ENCODE measurements at regions of chr18 and their contacts with region 1.

Region 1: GRCh38 chr18:62186774-62187542 is at the starts of genes PIGN and RELCH:
- DNase-seq: peak; percentile 96
- H3K4me3 Mint-ChIP-seq: peak within 1 kb of the TSS; percentile 96
- H3K27ac Mint-ChIP-seq: peak within 1 kb of the TSS; percentile 90
- H3K4me1 Mint-ChIP-seq: peaks cover 54% of the 10 kb centered on the region
- H3K27me3 Mint-ChIP-seq: no peaks in the 10 kb centered on the region
- total RNA-seq, gene PIGN: 27.2 to 29.7 TPM
- total RNA-seq, gene RELCH: 34.8 to 38.6 TPM

Region 2: DNA sequence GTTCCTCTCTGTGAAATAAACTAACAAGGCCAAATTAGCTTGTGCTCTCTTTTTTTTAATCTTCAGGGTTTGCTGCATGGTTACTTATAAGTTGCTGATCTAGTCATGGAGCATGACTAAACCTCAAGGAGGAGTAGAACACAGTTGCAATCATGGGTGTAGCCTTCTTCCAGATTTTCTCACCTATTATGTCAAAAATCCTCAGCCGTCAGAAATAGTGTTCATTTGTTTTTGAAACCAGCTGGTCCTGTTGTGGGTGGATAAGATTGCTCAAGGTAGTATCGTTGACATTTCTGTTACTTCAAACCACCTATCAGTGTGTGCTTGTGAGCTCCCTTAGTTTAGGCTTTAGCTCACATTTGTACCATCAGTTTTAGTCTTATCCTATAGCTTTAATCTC is 11.3 kb after region 1 on chr18:
- CTCF ChIA-PET with region 1: interaction called, 3 read pairs
- POLR2A ChIA-PET with region 1: interaction called, 14 read pairs
- DNase-seq: no peak
- H3K4me3 Mint-ChIP-seq: no peak overlapping the region
- H3K27ac Mint-ChIP-seq: no peak overlapping the region
- H3K4me1 Mint-ChIP-seq: peaks cover 30% of the 10 kb centered on the region
- H3K27me3 Mint-ChIP-seq: no peaks in the 10 kb centered on the region

Region 3: DNA sequence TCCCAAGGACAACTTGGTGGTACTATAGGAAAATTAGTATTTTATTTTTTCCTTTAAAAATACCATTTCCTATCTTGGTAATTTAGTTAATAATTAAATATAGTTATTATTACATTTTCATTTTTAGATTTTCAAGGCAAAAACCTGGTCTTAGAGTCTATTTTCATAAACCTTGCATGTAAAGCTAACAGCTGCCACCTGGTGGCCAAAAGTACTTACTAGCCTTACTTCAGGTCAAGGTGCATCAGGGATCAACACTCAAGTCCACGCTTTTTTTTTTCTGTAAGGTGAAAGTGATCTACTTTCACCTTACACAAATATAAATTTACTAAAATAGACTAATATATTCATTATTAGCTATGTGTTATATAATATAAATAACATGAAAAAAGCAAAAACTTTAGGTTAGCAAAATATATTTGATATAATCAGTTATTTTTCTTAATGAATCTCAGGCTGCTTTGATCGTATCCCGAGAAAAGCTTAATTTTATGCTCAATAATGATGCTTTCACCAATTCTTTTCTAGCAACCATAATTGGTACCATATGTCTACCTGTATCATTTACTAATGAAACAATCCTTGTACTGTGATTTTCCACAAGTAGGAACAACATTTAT is 62.6 kb after region 1 on chr18:
- CTCF ChIA-PET with region 1: interaction called, 41 read pairs
- POLR2A ChIA-PET with region 1: interaction called, 17 read pairs
- DNase-seq: peak; percentile 74
- H3K4me3 Mint-ChIP-seq: no peak overlapping the region
- H3K27ac Mint-ChIP-seq: no peak overlapping the region
- H3K4me1 Mint-ChIP-seq: no peaks in the 10 kb centered on the region
- H3K27me3 Mint-ChIP-seq: no peaks in the 10 kb centered on the region

Region 4: DNA sequence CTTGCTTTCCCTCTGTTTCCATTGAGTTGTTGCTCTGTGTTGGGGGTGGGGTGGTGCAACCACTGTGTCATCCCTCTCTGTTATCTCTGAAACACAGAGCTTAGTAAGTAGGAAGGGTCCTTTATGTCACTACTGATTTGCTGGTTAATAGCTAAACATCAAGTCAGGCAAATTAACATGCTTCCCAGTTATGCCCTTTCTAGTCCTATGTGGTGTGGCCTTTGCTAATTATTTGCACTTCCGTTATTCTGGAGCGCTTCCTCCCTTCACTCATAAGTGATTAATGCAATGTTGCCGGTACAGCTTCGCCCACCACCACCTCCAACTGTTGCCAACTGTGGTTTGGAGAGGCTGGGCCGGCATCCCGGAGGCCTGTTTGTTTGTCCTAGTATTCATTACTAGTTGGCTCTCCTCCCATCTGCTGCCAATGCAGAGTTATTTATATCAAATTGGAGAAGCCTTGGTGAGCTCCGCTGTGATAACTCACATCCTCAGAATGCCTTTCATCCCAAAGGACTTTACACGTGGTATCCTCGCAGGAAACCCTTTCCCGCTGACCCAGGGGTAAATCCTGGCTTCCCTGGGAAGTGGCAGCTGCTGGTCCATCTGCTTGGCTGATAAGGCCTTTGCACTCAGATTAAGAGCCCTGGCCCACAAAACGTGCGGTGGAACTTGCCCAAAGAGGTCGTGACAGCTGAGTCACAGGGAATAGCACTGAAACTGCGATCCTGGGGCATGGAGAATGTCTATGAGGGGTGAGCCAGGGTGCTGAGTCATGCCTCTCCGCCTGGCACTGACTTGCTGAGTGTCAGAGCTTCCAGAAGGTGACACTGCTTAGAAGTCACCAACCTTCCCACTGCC is 263.8 kb after region 1 on chr18:
- CTCF ChIA-PET with region 1: no interaction called
- POLR2A ChIA-PET with region 1: no interaction called
- DNase-seq: no peak
- H3K4me3 Mint-ChIP-seq: no peak overlapping the region
- H3K27ac Mint-ChIP-seq: no peak overlapping the region
- H3K4me1 Mint-ChIP-seq: peaks cover 19% of the 10 kb centered on the region
- H3K27me3 Mint-ChIP-seq: peaks cover 9% of the 10 kb centered on the region

Region 5: GRCh38 chr18:62505669-62506494 is 318.9 kb after region 1 on chr18:
- CTCF ChIA-PET with region 1: no interaction called
- POLR2A ChIA-PET with region 1: interaction called, 11 read pairs
- DNase-seq: peak; percentile 48
- H3K4me3 Mint-ChIP-seq: peak overlapping the region; percentile 70
- H3K27ac Mint-ChIP-seq: peak overlapping the region; percentile 100
- H3K4me1 Mint-ChIP-seq: peaks cover 24% of the 10 kb centered on the region
- H3K27me3 Mint-ChIP-seq: no peaks in the 10 kb centered on the region

Region 6: DNA sequence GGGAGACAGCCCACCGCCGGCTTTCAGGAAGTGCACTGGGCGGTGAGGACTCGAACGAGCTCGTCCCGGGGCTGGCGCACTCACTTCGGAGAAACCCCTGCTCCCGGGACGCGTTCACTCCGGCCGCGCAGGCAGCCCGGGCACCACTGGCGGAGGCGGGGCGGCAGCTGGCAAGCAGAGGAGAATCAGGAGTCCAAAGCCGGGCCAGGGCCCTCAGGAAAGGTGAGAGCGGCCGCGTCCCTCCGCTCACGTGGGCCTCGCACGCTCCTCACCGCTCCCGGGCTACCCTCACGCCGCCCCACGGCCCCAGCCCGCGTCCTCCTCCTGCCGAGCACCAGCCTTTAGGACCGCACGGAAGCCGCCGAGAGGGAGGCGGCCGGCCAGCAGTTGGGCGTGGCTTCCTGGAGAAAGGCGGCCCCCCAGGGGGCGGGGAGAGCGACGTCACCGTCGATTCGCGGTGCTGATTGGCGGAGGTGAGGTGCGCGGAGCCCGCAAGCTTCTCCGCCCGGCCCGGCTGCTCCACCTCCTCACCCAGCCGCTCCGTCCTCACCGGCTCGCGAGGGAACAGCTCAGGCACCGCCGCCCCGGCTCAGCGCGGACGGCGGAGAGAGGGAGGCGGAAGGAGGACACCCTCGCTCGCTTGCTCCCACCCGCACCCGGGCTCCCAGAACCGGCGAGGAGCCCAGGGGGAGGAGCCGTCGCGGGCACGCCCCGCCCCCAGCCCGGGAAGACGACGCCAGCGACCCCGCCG is 335.7 kb after region 1 on chr18 and contains the start of gene ZCCHC2:
- CTCF ChIA-PET with region 1: no interaction called
- POLR2A ChIA-PET with region 1: interaction called, 27 read pairs
- DNase-seq: peak; percentile 99
- H3K4me3 Mint-ChIP-seq: peak within 1 kb of the TSS; percentile 93
- H3K27ac Mint-ChIP-seq: peak within 1 kb of the TSS; percentile 96
- H3K4me1 Mint-ChIP-seq: peaks cover 21% of the 10 kb centered on the region
- H3K27me3 Mint-ChIP-seq: no peaks in the 10 kb centered on the region
- total RNA-seq, gene ZCCHC2: 51.7 to 52.3 TPM